ENCODE measurements at regions of chr7 and their contacts with region 1.

Region 1: GRCh38 chr7:112337892-112338291 is 112.4 kb upstream of the IFRD1 start:
- DNase-seq: no peak
- ATAC-seq: no peak
- H3K4me3 ChIP-seq: no peak overlapping the region
- H3K27ac ChIP-seq: no peak overlapping the region
- H3K4me1 ChIP-seq: peaks cover 17% of the 10 kb centered on the region
- H3K27me3 ChIP-seq: no peaks in the 10 kb centered on the region
- CTCF ChIP-seq: no peak
- EP300 ChIP-seq: no peak
- POLR2A ChIP-seq: no peak
- RAD21 ChIP-seq: no peak

Region 2: GRCh38 chr7:112322070-112322469 is 15.8 kb before region 1 on chr7:
- CTCF ChIA-PET with region 1: no interaction called
- POLR2A ChIA-PET with region 1: no interaction called
- in situ Hi-C with region 1: no loop called
- intact Hi-C with region 1: no loop called
- DNase-seq: no peak
- ATAC-seq: no peak
- H3K4me3 ChIP-seq: no peak overlapping the region
- H3K27ac ChIP-seq: no peak overlapping the region
- H3K4me1 ChIP-seq: no peaks in the 10 kb centered on the region
- H3K27me3 ChIP-seq: no peaks in the 10 kb centered on the region
- CTCF ChIP-seq: no peak
- EP300 ChIP-seq: no peak
- POLR2A ChIP-seq: no peak
- RAD21 ChIP-seq: no peak

Region 3: DNA sequence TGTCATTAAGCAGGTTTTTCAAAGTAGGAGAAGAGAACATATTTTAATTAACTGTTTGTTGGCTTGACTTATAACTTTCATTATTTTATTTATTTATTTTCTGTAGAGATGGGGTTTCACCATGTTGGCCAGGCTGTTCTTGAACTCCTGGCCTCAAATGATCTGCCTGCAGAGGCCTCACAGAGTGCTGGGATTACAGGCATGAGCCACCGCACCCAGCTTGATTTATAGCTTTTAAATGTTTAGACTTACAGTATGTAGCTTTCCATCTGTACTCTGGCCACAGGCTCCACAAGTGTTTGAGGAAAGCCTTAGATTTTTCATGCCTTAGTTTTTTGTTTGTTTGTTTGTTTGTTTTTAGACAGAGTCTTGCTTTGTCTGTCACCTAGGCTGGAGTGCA is 39.7 kb after region 1 on chr7:
- CTCF ChIA-PET with region 1: no interaction called
- POLR2A ChIA-PET with region 1: no interaction called
- in situ Hi-C with region 1: no loop called
- intact Hi-C with region 1: loop called (anchors 2 kb)
- DNase-seq: no peak
- ATAC-seq: no peak
- H3K4me3 ChIP-seq: no peak overlapping the region
- H3K27ac ChIP-seq: no peak overlapping the region
- H3K4me1 ChIP-seq: no peaks in the 10 kb centered on the region
- H3K27me3 ChIP-seq: no peaks in the 10 kb centered on the region
- CTCF ChIP-seq: no peak
- EP300 ChIP-seq: no peak
- POLR2A ChIP-seq: no peak
- RAD21 ChIP-seq: no peak

Measured in HepG2 (cell line).